MCF 10A (cell line): ENCODE measurements at regions of chr2 and their contacts with region 1.

Region 1: DNA sequence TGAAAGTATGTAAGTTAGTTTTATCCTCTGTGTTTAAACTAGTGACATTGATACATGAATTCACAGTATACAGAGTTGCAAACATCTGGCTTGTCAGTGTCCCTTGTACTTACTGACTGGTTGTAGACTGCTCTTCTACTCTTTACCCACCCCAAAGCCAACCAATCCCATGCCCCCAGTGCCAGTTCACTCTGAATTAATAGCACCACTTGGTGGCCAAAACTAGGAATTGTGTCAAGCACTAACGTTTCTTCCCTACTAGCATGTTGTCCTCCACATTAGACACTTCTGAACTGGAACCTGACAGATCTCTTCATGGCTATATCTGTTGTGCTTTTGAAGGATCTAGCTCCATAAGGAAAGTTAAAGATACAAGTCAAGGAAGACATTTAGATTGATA is 27.2 kb upstream of the OTX1 start:
- DNase-seq: peak; percentile 67
- H3K4me3 Mint-ChIP-seq: no peak overlapping the region
- H3K27ac Mint-ChIP-seq: peak overlapping the region; percentile 52
- H3K4me1 Mint-ChIP-seq: peaks cover 5% of the 10 kb centered on the region
- H3K27me3 Mint-ChIP-seq: no peaks in the 10 kb centered on the region
- CTCF ChIP-seq: peak; percentile 35

Region 2: GRCh38 chr2:61926531-61927477 is 1096.6 kb before region 1 on chr2:
- CTCF ChIA-PET with region 1: no interaction called
- POLR2A ChIA-PET with region 1: no interaction called
- intact Hi-C with region 1: no loop called
- DNase-seq: no peak
- H3K4me3 Mint-ChIP-seq: no peak overlapping the region
- H3K27ac Mint-ChIP-seq: no peak overlapping the region
- H3K4me1 Mint-ChIP-seq: no peaks in the 10 kb centered on the region
- H3K27me3 Mint-ChIP-seq: no peaks in the 10 kb centered on the region
- CTCF ChIP-seq: no peak

Region 3: DNA sequence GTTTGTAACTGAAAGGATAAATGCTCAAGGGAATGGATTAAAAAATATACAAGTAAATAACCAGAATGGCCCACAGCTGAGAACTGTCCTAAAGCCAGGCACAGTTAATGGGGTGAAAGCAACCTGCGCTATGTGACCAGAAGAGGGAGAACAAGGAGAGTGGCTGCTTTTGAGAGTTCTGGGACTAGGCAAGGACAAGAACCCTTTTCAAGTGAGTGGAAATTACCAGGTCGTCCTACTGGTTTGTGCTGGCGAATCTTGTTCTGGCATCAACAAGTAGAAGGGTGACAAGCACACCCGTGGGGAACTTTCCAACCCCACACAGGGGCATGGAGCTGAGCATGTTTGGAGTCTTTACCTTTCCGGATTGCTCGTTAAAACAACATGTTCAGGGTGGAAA is 600.2 kb before region 1 on chr2:
- CTCF ChIA-PET with region 1: no interaction called
- POLR2A ChIA-PET with region 1: no interaction called
- intact Hi-C with region 1: no loop called
- DNase-seq: peak; percentile 32
- H3K4me3 Mint-ChIP-seq: no peak overlapping the region
- H3K27ac Mint-ChIP-seq: peak overlapping the region; percentile 11
- H3K4me1 Mint-ChIP-seq: peaks cover 27% of the 10 kb centered on the region
- H3K27me3 Mint-ChIP-seq: no peaks in the 10 kb centered on the region
- CTCF ChIP-seq: no peak

Region 4: DNA sequence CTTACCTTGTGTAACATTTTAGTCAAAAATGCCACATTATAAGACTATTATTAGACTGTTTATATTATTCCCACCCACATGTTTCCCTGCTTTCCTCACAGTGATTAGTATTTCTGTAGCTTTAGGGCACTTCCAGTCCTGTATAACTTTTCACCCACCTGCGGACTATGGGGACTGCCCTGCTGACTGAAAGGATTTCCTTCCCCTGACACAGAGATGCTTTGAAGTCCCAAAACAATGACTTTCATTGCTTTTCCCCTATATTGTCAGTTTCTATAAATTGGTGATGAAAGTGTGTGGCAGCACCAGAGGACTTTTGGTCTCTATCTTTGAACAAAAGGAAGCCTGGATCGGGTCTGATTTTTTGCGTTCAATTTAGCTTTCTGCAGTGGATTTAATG is 31.8 kb before region 1 on chr2:
- CTCF ChIA-PET with region 1: no interaction called
- POLR2A ChIA-PET with region 1: no interaction called
- intact Hi-C with region 1: no loop called
- DNase-seq: no peak
- H3K4me3 Mint-ChIP-seq: no peak overlapping the region
- H3K27ac Mint-ChIP-seq: no peak overlapping the region
- H3K4me1 Mint-ChIP-seq: no peaks in the 10 kb centered on the region
- H3K27me3 Mint-ChIP-seq: no peaks in the 10 kb centered on the region
- CTCF ChIP-seq: no peak

Region 5: DNA sequence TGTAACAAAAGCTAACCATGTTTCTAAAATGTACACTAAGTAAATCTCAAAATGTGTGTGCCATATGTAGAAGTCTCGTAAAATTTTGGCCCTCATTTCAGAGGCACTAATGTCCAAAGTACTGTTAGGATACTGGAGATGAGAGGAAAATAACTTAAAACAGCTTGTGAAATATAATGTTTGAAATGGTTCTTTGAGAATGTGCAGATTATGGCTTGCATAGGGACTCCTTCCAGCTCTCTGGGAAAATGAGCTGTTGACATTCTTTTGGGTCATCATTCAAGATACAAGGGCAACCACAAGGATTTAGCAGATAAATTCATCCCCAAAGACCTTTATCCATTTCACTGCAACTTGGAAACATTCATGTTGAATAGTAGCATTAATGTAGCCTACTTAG is 10.9 kb before region 1 on chr2:
- CTCF ChIA-PET with region 1: interaction called, 24 read pairs
- POLR2A ChIA-PET with region 1: interaction called, 4 read pairs
- intact Hi-C with region 1: no loop called
- DNase-seq: no peak
- H3K4me3 Mint-ChIP-seq: no peak overlapping the region
- H3K27ac Mint-ChIP-seq: no peak overlapping the region
- H3K4me1 Mint-ChIP-seq: no peaks in the 10 kb centered on the region
- H3K27me3 Mint-ChIP-seq: no peaks in the 10 kb centered on the region
- CTCF ChIP-seq: no peak

Region 6: DNA sequence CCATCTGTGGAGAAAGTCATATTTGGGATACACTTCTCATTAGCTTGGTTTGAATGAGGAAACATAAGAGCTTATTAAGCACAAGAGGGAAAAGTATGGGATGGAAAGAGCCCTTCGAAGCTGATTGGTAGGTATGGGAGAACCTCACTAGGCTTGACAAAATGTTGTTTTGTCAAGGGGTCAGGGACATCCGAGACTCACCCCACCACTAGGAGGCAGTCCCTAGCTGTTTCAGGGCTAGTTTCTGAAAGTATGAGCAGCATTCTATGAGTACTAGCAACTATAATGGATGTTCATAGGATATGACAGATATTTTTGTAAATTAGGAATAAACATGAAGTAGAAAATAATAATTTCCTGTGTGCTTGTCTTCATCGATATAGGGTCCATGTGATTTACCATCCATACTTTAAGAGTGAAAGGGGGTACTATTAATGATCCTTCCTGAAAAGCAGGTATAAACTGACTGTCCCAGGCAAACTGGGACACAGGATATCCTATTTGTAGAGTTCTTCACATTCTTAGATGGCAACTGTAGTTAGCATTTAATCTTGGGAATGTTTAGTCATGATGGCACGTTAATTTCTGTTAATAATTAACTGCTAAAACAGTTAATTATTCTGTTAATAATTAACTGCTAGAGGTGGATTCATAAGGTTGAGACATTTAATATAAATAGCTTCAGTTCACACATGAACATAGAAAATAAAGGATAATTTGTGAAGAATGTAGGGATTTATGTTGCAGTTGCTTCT is 55.6 kb after region 1 on chr2:
- CTCF ChIA-PET with region 1: no interaction called
- POLR2A ChIA-PET with region 1: no interaction called
- intact Hi-C with region 1: no loop called
- DNase-seq: peak; percentile 58
- H3K4me3 Mint-ChIP-seq: no peak overlapping the region
- H3K27ac Mint-ChIP-seq: no peak overlapping the region
- H3K4me1 Mint-ChIP-seq: peaks cover 5% of the 10 kb centered on the region
- H3K27me3 Mint-ChIP-seq: no peaks in the 10 kb centered on the region
- CTCF ChIP-seq: peak; percentile 32